ENCODE measurements at regions of chr6 and their contacts with region 1.

Region 1: GRCh38 chr6:27078734-27079357 is 168.7 kb upstream of the PRSS16 start:
- DNase-seq: peak in 1 of 3 donors; percentile 14
- ATAC-seq: peak; percentile 59 to 78
- H3K4me3 ChIP-seq: peak overlapping the region; percentile 16
- H3K27ac ChIP-seq: no peak overlapping the region
- H3K4me1 ChIP-seq: no peaks in the 10 kb centered on the region
- H3K27me3 ChIP-seq: no peaks in the 10 kb centered on the region

Region 2: GRCh38 chr6:26607434-26608230 is 471.2 kb before region 1 on chr6:
- intact Hi-C with region 1: loop called (anchors 5 to 10 kb)
- DNase-seq: no peak
- ATAC-seq: peak; percentile 65 to 75
- H3K4me3 ChIP-seq: peak overlapping the region; percentile 37
- H3K27ac ChIP-seq: no peak overlapping the region
- H3K4me1 ChIP-seq: no peaks in the 10 kb centered on the region
- H3K27me3 ChIP-seq: no peaks in the 10 kb centered on the region

Region 3: DNA sequence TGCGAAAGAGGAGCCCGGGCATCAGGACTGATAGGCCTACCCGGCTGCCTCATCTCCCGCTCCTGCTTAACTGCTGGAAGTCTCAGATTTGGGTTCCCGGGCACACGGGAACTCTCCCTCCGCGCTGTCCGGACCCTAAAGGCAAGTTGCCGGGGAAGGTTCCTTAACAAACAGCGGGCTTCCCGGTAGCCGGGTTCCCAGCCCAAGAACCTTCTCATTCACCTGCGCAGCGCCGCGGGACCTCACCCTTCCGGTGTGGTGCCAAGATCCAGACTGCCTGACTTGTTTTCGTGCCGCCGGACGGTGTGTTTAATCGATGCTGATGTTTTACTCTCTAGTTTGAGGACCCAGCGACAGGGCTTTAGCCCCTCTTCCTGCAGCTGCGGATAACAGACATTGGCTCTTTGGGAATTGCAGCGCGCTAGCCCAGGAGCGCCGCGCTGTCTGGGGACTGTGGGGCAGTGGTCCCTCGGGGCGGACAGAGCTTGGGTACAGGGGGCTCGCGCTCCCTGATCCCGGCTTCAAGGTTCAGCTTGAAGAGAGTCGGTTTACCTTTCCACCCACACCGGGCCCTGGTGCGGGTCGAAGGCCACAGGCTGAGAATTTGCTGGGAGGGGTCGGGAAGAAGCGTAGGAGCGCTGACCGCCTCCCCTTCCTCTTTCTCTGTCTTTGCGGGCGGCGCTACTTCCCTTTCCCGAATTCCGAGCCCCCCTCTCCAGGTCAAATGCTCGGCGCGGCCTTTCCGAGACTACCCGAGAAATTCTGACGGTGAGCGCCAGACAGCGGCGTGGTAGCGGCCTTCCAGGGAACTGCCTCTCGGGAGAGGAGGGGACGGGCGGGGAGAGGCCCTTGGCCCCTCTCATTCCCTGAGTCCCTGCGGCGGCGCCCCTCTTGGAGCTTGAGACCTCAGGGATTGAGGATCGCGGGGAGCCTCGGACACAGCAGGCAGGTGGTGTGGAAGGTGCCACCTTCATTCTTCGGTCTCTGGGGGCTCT is 464.9 kb before region 1 on chr6:
- intact Hi-C with region 1: loop called (anchors 5 to 10 kb)
- DNase-seq: peak in 2 of 3 donors; percentile 52 to 65
- ATAC-seq: peak; percentile 53 to 57
- H3K4me3 ChIP-seq: peak overlapping the region; percentile 59
- H3K27ac ChIP-seq: no peak overlapping the region
- H3K4me1 ChIP-seq: no peaks in the 10 kb centered on the region
- H3K27me3 ChIP-seq: no peaks in the 10 kb centered on the region